PC-9 (cell line): ENCODE measurements at regions of chr3 and their contacts with region 1.

Region 1: DNA sequence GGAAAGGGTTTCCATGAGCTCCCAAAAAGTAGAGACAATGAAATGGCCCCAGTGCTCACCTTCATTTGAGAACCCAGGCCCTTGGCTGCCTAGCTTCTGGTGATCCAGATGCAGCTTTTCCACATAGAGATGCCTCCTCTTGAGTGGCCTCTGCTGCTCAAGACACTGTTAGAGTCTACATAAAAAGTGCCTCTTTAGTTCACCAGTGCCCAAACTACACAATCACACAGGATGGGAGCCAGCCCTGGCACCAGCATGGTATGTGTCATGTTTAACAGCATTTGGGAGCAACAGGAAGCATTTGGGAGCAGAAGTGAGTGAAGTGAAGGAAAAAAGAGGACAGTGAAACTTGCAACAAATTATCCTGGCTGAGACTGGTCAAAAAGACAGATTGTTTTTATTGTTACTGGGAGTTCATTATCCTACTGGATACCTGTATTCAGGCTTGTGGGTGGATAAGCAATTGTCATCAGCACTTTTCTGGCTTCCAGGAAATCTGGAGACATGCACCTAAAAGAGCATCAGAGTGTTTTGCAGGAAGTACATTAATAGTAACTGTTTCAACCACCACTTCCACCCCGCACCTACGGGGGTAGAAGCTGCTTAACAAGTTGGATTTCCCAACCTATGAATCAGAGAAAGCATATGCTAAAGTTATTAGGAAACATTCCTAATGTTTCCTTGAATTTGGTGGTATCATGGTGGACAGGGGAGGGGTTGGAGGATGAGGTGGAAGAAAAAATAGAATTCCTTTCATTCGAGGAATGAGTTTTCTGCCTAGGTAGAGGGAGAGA is 416.2 kb downstream of the IGSF11 start:
- DNase-seq: no peak
- H3K4me3 ChIP-seq: no peak overlapping the region
- H3K27ac ChIP-seq: no peak overlapping the region
- H3K4me1 ChIP-seq: no peaks in the 10 kb centered on the region
- H3K27me3 ChIP-seq: no peaks in the 10 kb centered on the region
- CTCF ChIP-seq: no peak

Region 2: GRCh38 chr3:118607915-118608820 is 10.3 kb before region 1 on chr3:
- CTCF ChIA-PET with region 1: interaction called, 13 read pairs
- POLR2A ChIA-PET with region 1: no interaction called
- intact Hi-C with region 1: no loop called
- DNase-seq: no peak
- H3K4me3 ChIP-seq: no peak overlapping the region
- H3K27ac ChIP-seq: no peak overlapping the region
- H3K4me1 ChIP-seq: no peaks in the 10 kb centered on the region
- H3K27me3 ChIP-seq: no peaks in the 10 kb centered on the region
- CTCF ChIP-seq: no peak

Region 3: GRCh38 chr3:120364821-120365220 is 1746.4 kb after region 1 on chr3:
- CTCF ChIA-PET with region 1: no interaction called
- POLR2A ChIA-PET with region 1: interaction called, 15 read pairs
- intact Hi-C with region 1: no loop called
- DNase-seq: no peak
- H3K4me3 ChIP-seq: no peak overlapping the region
- H3K27ac ChIP-seq: no peak overlapping the region
- H3K4me1 ChIP-seq: peaks cover 11% of the 10 kb centered on the region
- H3K27me3 ChIP-seq: no peaks in the 10 kb centered on the region
- CTCF ChIP-seq: no peak